ENCODE measurements at regions of chr12 and their contacts with region 1.

Region 1: GRCh38 chr12:82358200-82359114 is at the starts of genes CCDC59 and METTL25:
- DNase-seq: peak; percentile 91 to 93
- H3K4me3 ChIP-seq: peak within 1 kb of the TSS; percentile 89
- H3K27ac ChIP-seq: peak within 1 kb of the TSS; percentile 86
- H3K4me1 ChIP-seq: peaks cover 10% of the 10 kb centered on the region; the same call in 1 of the 2 replicates
- H3K27me3 ChIP-seq: no peaks in the 10 kb centered on the region
- CTCF ChIP-seq: peak; percentile 97
- total RNA-seq, gene CCDC59: 28.9 and 49.9 TPM in 2 replicates
- total RNA-seq, gene METTL25: 2.2 and 2.8 TPM in 2 replicates

Region 2: GRCh38 chr12:81644503-81644902 is 714.0 kb before region 1 on chr12:
- CTCF ChIA-PET with region 1: no interaction called
- POLR2A ChIA-PET with region 1: no interaction called
- intact Hi-C with region 1: loop called (anchors 10 kb)
- DNase-seq: peak in 1 of 2 experiments; percentile 39
- H3K4me3 ChIP-seq: no peak overlapping the region
- H3K27ac ChIP-seq: no peak overlapping the region
- H3K4me1 ChIP-seq: no peaks in the 10 kb centered on the region
- H3K27me3 ChIP-seq: no peaks in the 10 kb centered on the region
- CTCF ChIP-seq: peak; percentile 71

Region 3: GRCh38 chr12:81896771-81897170 is 461.7 kb before region 1 on chr12:
- CTCF ChIA-PET with region 1: interaction called, 12 read pairs
- POLR2A ChIA-PET with region 1: no interaction called
- intact Hi-C with region 1: no loop called
- DNase-seq: no peak
- H3K4me3 ChIP-seq: no peak overlapping the region
- H3K27ac ChIP-seq: no peak overlapping the region
- H3K4me1 ChIP-seq: no peaks in the 10 kb centered on the region
- H3K27me3 ChIP-seq: no peaks in the 10 kb centered on the region
- CTCF ChIP-seq: no peak

Region 4: GRCh38 chr12:82216475-82216874 is 142.0 kb before region 1 on chr12:
- CTCF ChIA-PET with region 1: no interaction called
- POLR2A ChIA-PET with region 1: no interaction called
- intact Hi-C with region 1: no loop called
- DNase-seq: no peak
- H3K4me3 ChIP-seq: no peak overlapping the region
- H3K27ac ChIP-seq: no peak overlapping the region
- H3K4me1 ChIP-seq: no peaks in the 10 kb centered on the region
- H3K27me3 ChIP-seq: no peaks in the 10 kb centered on the region
- CTCF ChIP-seq: no peak

Region 5: DNA sequence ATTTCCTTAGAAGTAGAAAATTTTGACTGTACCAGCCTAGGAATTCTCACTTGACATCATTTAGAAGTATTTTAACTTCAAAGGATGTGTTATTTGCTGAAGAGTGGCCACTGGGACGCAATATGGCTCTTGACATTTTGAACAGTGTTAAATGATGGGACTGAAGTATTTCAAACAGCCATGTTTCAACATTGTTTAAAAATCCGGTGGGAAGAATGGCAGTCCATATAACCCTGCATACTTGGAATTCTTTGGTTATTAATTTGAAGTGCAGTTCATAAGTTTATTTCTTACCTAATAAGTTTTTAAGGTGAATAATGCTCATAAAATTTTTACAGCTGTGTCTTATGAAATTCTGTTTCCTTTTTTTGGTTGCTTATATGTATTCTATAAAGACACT is 336.5 kb after region 1 on chr12:
- CTCF ChIA-PET with region 1: interaction called, 15 read pairs
- POLR2A ChIA-PET with region 1: no interaction called
- intact Hi-C with region 1: no loop called
- DNase-seq: peak in 1 of 2 experiments; percentile 75
- H3K4me3 ChIP-seq: no peak overlapping the region
- H3K27ac ChIP-seq: no peak overlapping the region
- H3K4me1 ChIP-seq: peaks cover 8% of the 10 kb centered on the region; the same call in 1 of the 2 replicates
- H3K27me3 ChIP-seq: no peaks in the 10 kb centered on the region
- CTCF ChIP-seq: no peak